Calu3 (cell line): ENCODE measurements at regions of chr10 and their contacts with region 1.

Region 1: GRCh38 chr10:127429601-127430312 is 119.4 kb upstream of the NPS start:
- DNase-seq: no peak
- H3K4me3 Mint-ChIP-seq: no peak overlapping the region
- H3K27ac Mint-ChIP-seq: no peak overlapping the region
- H3K4me1 Mint-ChIP-seq: no peaks in the 10 kb centered on the region
- H3K27me3 Mint-ChIP-seq: no peaks in the 10 kb centered on the region
- CTCF ChIP-seq: no peak

Region 2: DNA sequence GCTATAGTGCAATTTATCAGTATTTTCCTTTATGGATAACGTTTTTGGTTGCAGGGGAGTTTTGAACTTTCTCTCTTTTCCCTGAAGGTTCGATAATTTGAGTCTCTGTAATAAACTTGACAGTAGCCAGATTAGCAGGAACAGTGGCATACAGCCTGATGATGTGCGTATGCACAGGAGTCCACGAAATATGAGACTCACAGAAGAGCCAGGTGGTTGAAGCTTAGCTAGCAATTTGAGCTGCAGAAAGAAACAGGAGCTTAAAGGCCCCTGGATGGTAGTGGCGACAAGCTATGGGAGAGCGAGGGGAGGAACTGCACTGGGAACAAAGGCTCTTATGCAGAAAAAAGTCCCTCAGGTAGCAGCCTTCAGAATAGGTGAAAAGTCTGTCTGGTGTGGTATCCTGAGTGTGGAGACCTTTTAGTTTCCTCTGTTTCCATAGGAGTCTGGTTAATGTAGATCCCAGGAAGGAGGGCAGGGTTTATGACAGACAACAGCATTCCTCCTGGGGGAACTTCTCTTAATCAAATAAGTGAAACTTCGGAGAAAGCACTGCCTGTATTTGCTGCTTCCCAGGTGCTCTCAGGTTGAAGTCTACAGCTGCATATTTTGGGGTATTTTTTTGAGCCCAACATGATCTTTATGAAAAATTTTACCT is 1500.7 kb before region 1 on chr10:
- CTCF ChIA-PET with region 1: interaction called, 15 read pairs
- intact Hi-C with region 1: no loop called
- DNase-seq: no peak
- H3K4me3 Mint-ChIP-seq: no peak overlapping the region
- H3K27ac Mint-ChIP-seq: no peak overlapping the region
- H3K4me1 Mint-ChIP-seq: no peaks in the 10 kb centered on the region
- H3K27me3 Mint-ChIP-seq: no peaks in the 10 kb centered on the region
- CTCF ChIP-seq: no peak

Region 3: DNA sequence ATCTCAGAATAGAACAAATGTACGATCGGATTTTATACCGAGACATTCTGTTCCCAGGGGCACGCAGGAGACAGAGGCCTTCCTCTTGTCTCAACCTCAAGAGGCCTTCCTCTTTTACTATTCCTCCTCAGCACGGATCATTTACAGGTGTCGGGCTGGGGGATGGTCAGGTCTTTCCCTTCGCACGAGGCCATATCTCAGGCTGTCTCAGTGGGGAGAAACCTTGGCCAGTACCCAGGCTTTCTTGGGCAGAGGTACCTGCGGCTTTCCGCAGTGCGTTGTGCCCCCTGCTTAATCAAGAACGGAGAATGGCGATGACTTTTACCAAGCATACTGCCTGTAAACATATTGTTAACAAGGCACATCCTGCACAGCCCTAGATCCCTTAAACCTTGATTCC is 1489.2 kb before region 1 on chr10:
- CTCF ChIA-PET with region 1: no interaction called
- intact Hi-C with region 1: no loop called
- DNase-seq: no peak
- H3K4me3 Mint-ChIP-seq: no peak overlapping the region
- H3K27ac Mint-ChIP-seq: no peak overlapping the region
- H3K4me1 Mint-ChIP-seq: no peaks in the 10 kb centered on the region
- H3K27me3 Mint-ChIP-seq: no peaks in the 10 kb centered on the region
- CTCF ChIP-seq: no peak

Region 4: DNA sequence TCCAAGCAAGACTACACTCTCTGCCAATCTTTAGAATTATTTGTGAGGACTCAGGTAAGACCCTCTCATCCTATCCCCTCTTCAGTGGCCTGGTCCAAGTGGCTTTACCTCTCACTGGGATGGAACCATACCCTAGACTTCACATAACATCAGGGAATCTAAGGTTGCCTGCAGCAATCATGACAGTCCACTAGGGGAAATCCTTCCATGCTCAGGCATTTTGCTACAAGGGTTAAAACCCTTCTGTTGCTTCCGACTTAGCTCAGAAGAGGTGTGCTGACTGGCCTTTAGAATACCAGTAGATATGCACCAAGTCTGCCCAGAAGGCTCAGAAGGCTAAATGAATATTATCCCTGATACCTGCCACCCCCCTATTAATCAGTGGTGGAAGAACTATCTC is 94.5 kb after region 1 on chr10:
- CTCF ChIA-PET with region 1: no interaction called
- intact Hi-C with region 1: no loop called
- DNase-seq: no peak
- H3K4me3 Mint-ChIP-seq: no peak overlapping the region
- H3K27ac Mint-ChIP-seq: no peak overlapping the region
- H3K4me1 Mint-ChIP-seq: no peaks in the 10 kb centered on the region
- H3K27me3 Mint-ChIP-seq: peaks cover 61% of the 10 kb centered on the region
- CTCF ChIP-seq: no peak

Region 5: GRCh38 chr10:127570036-127570435 is 140.3 kb after region 1 on chr10:
- CTCF ChIA-PET with region 1: no interaction called
- intact Hi-C with region 1: no loop called
- DNase-seq: no peak
- H3K4me3 Mint-ChIP-seq: no peak overlapping the region
- H3K27ac Mint-ChIP-seq: no peak overlapping the region
- H3K4me1 Mint-ChIP-seq: no peaks in the 10 kb centered on the region
- H3K27me3 Mint-ChIP-seq: peaks cover 21% of the 10 kb centered on the region
- CTCF ChIP-seq: no peak